Activated naive CD4-positive, alpha-beta T cell treated with anti-CD3 and anti-CD28 coated beads for 36 hours (primary cell): ENCODE measurements at regions of chr16 and their contacts with region 1.

Region 1: DNA sequence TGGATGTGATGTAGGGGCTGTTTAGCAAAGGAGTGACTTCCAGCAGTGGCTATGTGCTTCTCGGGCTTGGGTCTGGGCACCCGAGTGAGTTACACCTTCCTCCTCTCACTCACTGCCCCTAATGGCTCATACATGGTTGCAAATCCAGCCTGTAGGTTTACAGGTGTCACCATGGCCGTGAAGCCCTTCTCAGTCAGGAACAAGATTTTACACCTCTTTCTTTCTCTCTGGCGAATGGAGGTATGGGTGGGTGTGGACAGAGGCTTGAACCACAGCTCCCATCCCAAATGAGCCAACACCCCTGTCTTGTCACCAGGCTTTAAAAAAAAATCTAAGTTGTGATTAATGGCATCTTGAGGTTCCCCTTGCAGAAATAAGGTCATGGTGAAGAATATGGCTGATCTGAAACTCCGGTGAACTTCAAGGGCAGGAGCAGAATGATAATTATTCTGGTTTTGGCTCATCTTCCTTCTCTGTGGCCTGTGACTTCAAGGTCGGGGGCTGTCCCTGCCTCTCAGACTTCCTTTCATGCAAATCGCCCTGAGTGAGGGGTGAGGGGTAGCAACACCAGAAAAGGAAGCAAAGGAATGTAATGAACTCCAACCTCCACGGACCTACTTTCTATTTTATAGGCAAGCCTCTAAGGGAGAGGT is 331.2 kb downstream of the MAF start:
- DNase-seq: peak; percentile 90
- H3K4me3 Mint-ChIP-seq: peak overlapping the region; percentile 30
- H3K27ac Mint-ChIP-seq: peak overlapping the region; percentile 89
- H3K4me1 Mint-ChIP-seq: peaks cover 78% of the 10 kb centered on the region
- H3K27me3 Mint-ChIP-seq: peaks cover 29% of the 10 kb centered on the region

Region 2: DNA sequence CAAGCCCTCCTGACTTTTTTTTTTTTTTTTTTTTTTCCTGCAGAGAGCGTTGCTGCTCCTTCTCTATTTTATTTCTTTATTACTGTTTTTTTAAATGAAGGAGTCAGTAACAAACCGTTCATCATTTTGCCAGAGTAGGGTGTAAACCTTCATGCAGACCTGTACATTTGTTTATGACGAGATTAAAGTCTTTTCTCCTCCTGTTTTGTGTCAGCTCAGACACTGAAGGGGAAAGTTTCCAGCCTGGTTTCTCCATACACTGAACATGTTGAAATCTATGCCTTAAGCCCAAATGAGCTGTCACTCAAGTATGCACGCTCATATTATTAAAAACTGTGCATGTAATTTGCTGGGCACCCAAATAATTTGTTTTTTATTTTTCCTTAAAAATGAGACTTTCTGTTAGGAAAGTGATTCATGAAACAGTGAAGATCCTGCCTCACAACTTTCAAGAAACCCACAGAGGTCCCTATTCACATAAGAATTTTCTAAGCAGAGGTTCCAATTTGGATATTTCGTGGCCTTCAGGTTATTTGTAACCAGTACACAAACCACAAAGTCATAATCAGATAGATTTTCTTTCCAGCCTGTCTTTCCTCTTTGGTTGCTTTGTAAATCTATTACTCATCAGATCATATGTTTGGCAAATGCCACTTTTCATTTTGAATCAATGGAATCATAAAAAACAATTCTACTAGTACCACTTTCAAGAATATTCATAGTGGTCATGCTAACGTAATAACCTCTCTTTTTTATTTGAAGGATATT is 369.1 kb before region 1 on chr16:
- CTCF ChIA-PET with region 1: no interaction called
- intact Hi-C with region 1: loop called (anchors 1 kb)
- DNase-seq: no peak
- H3K4me3 Mint-ChIP-seq: no peak overlapping the region
- H3K27ac Mint-ChIP-seq: peak overlapping the region; percentile 24
- H3K4me1 Mint-ChIP-seq: peaks cover 18% of the 10 kb centered on the region
- H3K27me3 Mint-ChIP-seq: no peaks in the 10 kb centered on the region

Region 3: GRCh38 chr16:79154086-79154485 is 115.3 kb before region 1 on chr16:
- CTCF ChIA-PET with region 1: no interaction called
- intact Hi-C with region 1: loop called (anchors 1 kb)
- DNase-seq: no peak
- H3K4me3 Mint-ChIP-seq: no peak overlapping the region
- H3K27ac Mint-ChIP-seq: no peak overlapping the region
- H3K4me1 Mint-ChIP-seq: peaks cover 24% of the 10 kb centered on the region
- H3K27me3 Mint-ChIP-seq: no peaks in the 10 kb centered on the region

Region 4: GRCh38 chr16:79355600-79356358 is 86.4 kb after region 1 on chr16:
- CTCF ChIA-PET with region 1: no interaction called
- intact Hi-C with region 1: no loop called
- DNase-seq: no peak
- H3K4me3 Mint-ChIP-seq: no peak overlapping the region
- H3K27ac Mint-ChIP-seq: no peak overlapping the region
- H3K4me1 Mint-ChIP-seq: no peaks in the 10 kb centered on the region
- H3K27me3 Mint-ChIP-seq: no peaks in the 10 kb centered on the region

Region 5: DNA sequence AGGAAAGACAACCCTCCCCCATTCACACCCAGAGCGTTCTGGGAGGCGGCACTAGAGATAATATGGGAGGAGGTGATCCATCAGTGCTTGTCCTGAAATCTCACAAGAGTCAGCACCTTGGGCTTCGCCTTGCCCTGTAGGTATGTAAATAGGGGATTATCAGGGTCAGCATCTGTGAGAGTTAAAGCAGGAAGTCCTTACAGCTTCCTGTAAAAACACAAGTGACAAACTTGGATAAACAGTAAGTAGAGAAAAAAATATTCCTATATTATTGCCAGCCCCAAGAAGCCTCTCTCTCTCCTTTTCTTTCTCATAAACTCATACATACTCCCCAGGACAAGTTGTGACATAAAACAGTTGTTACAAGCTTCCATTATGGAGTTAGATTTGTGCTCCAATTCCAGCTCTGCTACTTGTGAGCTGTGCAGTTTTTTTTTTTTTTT is 143.5 kb after region 1 on chr16:
- CTCF ChIA-PET with region 1: no interaction called
- intact Hi-C with region 1: loop called (anchors 5 kb)
- DNase-seq: no peak
- H3K4me3 Mint-ChIP-seq: no peak overlapping the region
- H3K27ac Mint-ChIP-seq: no peak overlapping the region
- H3K4me1 Mint-ChIP-seq: peaks cover 24% of the 10 kb centered on the region
- H3K27me3 Mint-ChIP-seq: no peaks in the 10 kb centered on the region

Region 6: DNA sequence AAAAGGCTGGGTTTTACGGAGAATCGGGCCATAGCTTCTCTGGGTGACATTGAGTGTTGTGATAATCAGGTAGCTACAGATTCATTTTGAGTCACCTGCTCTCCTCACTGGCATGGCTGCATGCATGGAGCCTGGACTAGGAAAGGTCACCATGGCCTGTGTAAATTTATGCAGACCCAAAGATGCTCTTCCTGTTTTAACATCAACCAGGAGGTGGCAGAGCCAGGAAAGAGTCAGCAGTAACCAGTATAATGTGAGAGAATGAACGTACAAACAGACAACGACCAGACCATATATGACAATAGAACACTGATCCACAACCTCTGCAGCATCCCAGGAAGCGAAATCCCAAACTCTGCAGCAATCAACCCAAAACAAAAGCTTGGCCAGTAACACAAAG is 1231.2 kb after region 1 on chr16:
- CTCF ChIA-PET with region 1: no interaction called
- intact Hi-C with region 1: loop called (anchors 5 kb)
- DNase-seq: peak; percentile 5
- H3K4me3 Mint-ChIP-seq: no peak overlapping the region
- H3K27ac Mint-ChIP-seq: peak overlapping the region; percentile 21
- H3K4me1 Mint-ChIP-seq: peaks cover 20% of the 10 kb centered on the region
- H3K27me3 Mint-ChIP-seq: no peaks in the 10 kb centered on the region

Region 7: GRCh38 chr16:80804056-80804450 is 1534.7 kb after region 1 on chr16:
- CTCF ChIA-PET with region 1: no interaction called
- intact Hi-C with region 1: loop called (anchors 2 kb)
- DNase-seq: peak; percentile 63
- H3K4me3 Mint-ChIP-seq: peak overlapping the region; percentile 88
- H3K27ac Mint-ChIP-seq: peak overlapping the region; percentile 80
- H3K4me1 Mint-ChIP-seq: peaks cover 31% of the 10 kb centered on the region
- H3K27me3 Mint-ChIP-seq: peaks cover 4% of the 10 kb centered on the region